CD8-positive, alpha-beta T cell (primary cell): ENCODE measurements at regions of chr16 and their contacts with region 1.

Region 1: DNA sequence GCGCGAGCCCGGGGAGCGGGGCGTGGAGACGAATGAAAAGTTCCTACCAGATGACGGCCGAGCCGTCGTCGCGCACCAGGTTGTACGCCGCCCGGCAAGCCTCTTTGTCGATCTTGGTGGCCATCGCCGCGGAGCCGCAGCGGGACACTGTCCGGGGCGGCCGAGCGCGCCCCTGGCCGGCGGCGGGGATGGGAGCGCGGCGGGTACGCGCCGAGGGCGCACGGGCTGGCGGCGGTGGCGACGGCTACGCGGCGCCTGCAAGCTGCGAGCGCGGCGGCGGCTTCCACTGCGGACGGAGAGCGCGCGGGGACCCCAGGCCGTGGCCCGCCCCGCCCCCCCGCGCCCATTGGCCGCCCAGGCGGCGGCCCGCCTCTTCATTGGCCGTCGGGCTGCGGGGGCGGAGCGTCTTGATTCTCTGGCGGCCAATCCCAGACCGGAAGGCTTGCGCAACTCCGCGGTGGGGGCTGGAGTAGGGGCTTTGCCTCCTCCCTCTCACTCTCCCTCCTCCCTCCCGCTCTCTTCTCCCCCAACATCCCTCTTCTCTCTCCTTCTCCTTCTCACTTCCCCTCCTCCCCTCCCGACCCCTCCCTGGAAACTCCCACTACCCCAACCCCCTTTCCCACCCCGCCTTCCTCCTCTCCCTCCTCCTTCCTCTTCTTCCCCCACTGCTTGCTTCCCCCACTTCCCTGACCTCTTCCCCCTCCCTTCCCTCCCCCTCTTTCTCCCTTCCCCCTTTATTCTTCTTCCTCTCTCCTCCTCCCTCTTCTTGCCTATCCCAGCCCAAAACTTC is at the start of gene COTL1:
- DNase-seq: peak; percentile 85 to 97 (median 95)
- ATAC-seq: peak; percentile 86
- H3K4me3 ChIP-seq: peak within 1 kb of the TSS; percentile 80 to 82
- H3K4me3 Mint-ChIP-seq: peak within 1 kb of the TSS; percentile 95
- H3K27ac ChIP-seq: peak within 1 kb of the TSS; percentile 49 to 66
- H3K27ac Mint-ChIP-seq: peak within 1 kb of the TSS; percentile 90
- H3K4me1 ChIP-seq: peaks cover 43% of the 10 kb centered on the region
- H3K4me1 Mint-ChIP-seq: peaks cover 47% of the 10 kb centered on the region
- H3K27me3 ChIP-seq: peaks cover 0 to 4% of the 10 kb centered on the region in 2 experiments
- H3K27me3 Mint-ChIP-seq: no peaks in the 10 kb centered on the region
- CTCF ChIP-seq: no peak
- total RNA-seq, gene COTL1: 194 to 199 TPM

Region 2: DNA sequence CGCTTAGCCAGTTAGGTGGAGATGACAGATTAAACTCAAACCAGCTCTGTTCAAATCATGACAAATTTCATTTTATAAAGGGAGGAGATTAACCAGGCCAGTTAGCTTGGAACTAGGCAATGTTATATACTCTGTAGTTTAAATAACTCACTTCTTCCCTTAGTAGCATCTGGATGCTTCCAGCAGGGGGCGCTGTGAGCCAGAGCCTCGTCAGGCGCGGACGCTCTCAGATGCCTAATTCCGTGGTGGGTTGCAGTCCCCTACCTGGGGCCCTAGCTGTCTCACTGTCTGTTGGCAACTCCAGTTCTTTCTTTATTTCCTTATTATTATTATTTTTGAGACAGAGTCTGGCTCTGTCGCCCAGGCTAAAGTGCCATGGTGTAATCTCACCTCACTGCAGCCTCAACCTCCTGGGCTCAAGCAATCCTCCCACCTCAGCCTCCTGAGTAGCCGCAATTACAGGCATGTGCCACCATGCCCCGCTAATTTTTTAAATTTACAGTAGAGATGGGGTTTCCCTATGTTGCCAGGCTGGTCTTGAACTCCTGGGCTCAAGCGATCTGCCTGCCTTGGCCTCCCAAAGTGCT is 340.7 kb before region 1 on chr16:
- CTCF ChIA-PET with region 1: interaction called, 6 read pairs
- POLR2A ChIA-PET with region 1: interaction called, 3 read pairs
- intact Hi-C with region 1: loop called in 1 of 2 experiments (anchors 2 kb)
- DNase-seq: peak; percentile 43 to 80 (median 67)
- ATAC-seq: peak; percentile 62
- H3K4me3 ChIP-seq: no peak overlapping the region
- H3K4me3 Mint-ChIP-seq: no peak overlapping the region
- H3K27ac ChIP-seq: no peak overlapping the region
- H3K27ac Mint-ChIP-seq: no peak overlapping the region
- H3K4me1 ChIP-seq: no peaks in the 10 kb centered on the region
- H3K4me1 Mint-ChIP-seq: peaks cover 1% of the 10 kb centered on the region
- H3K27me3 ChIP-seq: no peaks in the 10 kb centered on the region
- H3K27me3 Mint-ChIP-seq: peaks cover 5% of the 10 kb centered on the region
- CTCF ChIP-seq: peak; percentile 82

Region 3: GRCh38 chr16:84548971-84549844 is 68.8 kb before region 1 on chr16:
- CTCF ChIA-PET with region 1: interaction called, 19 read pairs
- POLR2A ChIA-PET with region 1: interaction called, 10 read pairs
- intact Hi-C with region 1: loop called (anchors 1 kb)
- DNase-seq: peak; percentile 10 to 77 (median 40)
- ATAC-seq: peak; percentile 54
- H3K4me3 ChIP-seq: peak overlapping the region; percentile 45 to 63
- H3K4me3 Mint-ChIP-seq: peak overlapping the region; percentile 82
- H3K27ac ChIP-seq: peak overlapping the region; percentile 69 to 83
- H3K27ac Mint-ChIP-seq: peak overlapping the region; percentile 98
- H3K4me1 ChIP-seq: peaks cover 63% of the 10 kb centered on the region
- H3K4me1 Mint-ChIP-seq: peaks cover 68% of the 10 kb centered on the region
- H3K27me3 ChIP-seq: no peaks in the 10 kb centered on the region
- H3K27me3 Mint-ChIP-seq: no peaks in the 10 kb centered on the region
- CTCF ChIP-seq: no peak

Region 4: DNA sequence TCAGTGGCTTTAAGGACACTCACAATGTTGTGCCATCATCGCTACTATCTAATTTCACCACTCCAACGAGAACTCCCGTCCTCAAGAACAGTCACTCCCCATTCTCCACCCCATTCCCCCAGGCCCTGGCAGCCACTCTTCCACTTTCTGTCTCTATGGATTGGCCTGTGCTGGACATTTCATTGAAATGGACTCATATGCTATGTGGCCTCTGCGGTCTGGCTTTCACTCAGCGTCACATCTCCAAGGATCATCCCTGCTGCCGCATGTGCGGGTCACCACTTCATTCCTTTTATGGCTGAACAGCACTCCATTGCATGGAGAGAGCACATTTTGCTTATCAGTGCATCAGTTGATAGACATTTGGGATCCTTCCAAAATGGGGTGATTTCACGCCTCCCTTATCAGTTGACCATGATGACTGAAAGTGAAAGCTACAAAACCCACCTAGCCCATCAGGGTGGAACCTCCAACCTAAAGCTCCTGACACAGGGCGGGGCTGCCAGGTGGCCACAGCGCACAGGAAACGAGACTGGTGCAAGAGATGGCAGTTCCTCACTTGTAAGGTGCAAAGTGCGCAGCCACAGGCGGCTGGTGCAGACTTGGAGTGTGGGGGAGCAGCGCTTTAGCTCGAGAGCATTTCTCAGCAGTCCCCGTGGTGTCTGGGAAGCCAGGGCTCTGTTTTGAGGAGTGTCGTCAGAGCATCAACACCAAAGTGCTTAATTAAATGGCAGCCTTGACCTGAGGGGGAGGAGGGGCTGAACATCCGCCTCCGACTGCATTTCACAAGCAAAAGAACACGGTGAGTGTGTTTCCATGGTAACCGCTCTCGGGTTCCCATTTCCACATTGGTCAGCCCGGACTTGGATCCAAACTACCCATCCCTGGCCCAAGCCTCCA is 23.9 kb before region 1 on chr16:
- CTCF ChIA-PET with region 1: interaction called, 18 read pairs
- POLR2A ChIA-PET with region 1: interaction called, 59 read pairs
- intact Hi-C with region 1: loop called (anchors 1 kb)
- DNase-seq: peak; percentile 69 to 98 (median 84)
- ATAC-seq: peak; percentile 85
- H3K4me3 ChIP-seq: peak overlapping the region; percentile 37 to 46
- H3K4me3 Mint-ChIP-seq: peak overlapping the region; percentile 83
- H3K27ac ChIP-seq: peak overlapping the region; percentile 75 to 94
- H3K27ac Mint-ChIP-seq: peak overlapping the region; percentile 98
- H3K4me1 ChIP-seq: peaks cover 59% of the 10 kb centered on the region
- H3K4me1 Mint-ChIP-seq: peaks cover 72% of the 10 kb centered on the region
- H3K27me3 ChIP-seq: no peaks in the 10 kb centered on the region
- H3K27me3 Mint-ChIP-seq: no peaks in the 10 kb centered on the region
- CTCF ChIP-seq: no peak

Region 5: DNA sequence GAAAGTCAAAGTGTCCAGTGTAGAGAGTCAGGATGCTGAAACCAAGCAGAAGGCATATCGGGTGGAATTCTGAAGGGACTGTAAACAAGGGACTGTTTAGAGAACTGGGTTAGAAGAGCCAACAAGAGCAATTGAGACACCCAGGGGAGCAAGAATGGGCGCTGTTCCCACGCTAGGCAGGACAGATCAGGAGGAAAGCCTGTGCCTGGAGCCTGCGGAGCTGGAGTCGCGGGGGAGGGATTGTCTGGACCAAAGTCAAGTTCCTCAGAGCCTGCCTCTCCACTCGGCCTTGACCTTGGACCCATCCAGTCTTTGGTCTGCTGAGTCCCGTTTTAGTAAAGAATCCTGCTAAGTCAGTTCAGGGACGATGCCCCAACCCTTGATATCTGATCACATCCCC is 15.6 kb after region 1 on chr16:
- CTCF ChIA-PET with region 1: interaction called, 10 read pairs
- POLR2A ChIA-PET with region 1: no interaction called
- intact Hi-C with region 1: no loop called
- DNase-seq: no peak
- ATAC-seq: no peak
- H3K4me3 ChIP-seq: no peak overlapping the region
- H3K4me3 Mint-ChIP-seq: no peak overlapping the region
- H3K27ac ChIP-seq: no peak overlapping the region
- H3K27ac Mint-ChIP-seq: no peak overlapping the region
- H3K4me1 ChIP-seq: peaks cover 34% of the 10 kb centered on the region
- H3K4me1 Mint-ChIP-seq: peaks cover 32% of the 10 kb centered on the region
- H3K27me3 ChIP-seq: no peaks in the 10 kb centered on the region
- H3K27me3 Mint-ChIP-seq: no peaks in the 10 kb centered on the region
- CTCF ChIP-seq: no peak

Region 6: GRCh38 chr16:84720177-84720579 is 102.2 kb after region 1 on chr16:
- CTCF ChIA-PET with region 1: interaction called, 327 read pairs
- POLR2A ChIA-PET with region 1: no interaction called
- intact Hi-C with region 1: no loop called
- DNase-seq: no peak
- ATAC-seq: no peak
- H3K4me3 ChIP-seq: no peak overlapping the region
- H3K4me3 Mint-ChIP-seq: no peak overlapping the region
- H3K27ac ChIP-seq: no peak overlapping the region
- H3K27ac Mint-ChIP-seq: no peak overlapping the region
- H3K4me1 ChIP-seq: peaks cover 33% of the 10 kb centered on the region
- H3K4me1 Mint-ChIP-seq: peaks cover 76% of the 10 kb centered on the region
- H3K27me3 ChIP-seq: no peaks in the 10 kb centered on the region
- H3K27me3 Mint-ChIP-seq: no peaks in the 10 kb centered on the region
- CTCF ChIP-seq: no peak

Region 7: GRCh38 chr16:84754353-84754856 is 136.4 kb after region 1 on chr16:
- CTCF ChIA-PET with region 1: interaction called, 13 read pairs
- POLR2A ChIA-PET with region 1: no interaction called
- intact Hi-C with region 1: no loop called
- DNase-seq: peak; percentile 42 to 87 (median 63)
- ATAC-seq: peak; percentile 72
- H3K4me3 ChIP-seq: no peak overlapping the region
- H3K4me3 Mint-ChIP-seq: peak overlapping the region; percentile 53
- H3K27ac ChIP-seq: peak overlapping the region in 1 of 2 experiments; percentile 2
- H3K27ac Mint-ChIP-seq: peak overlapping the region; percentile 45
- H3K4me1 ChIP-seq: peaks cover 45% of the 10 kb centered on the region
- H3K4me1 Mint-ChIP-seq: peaks cover 81% of the 10 kb centered on the region
- H3K27me3 ChIP-seq: no peaks in the 10 kb centered on the region
- H3K27me3 Mint-ChIP-seq: no peaks in the 10 kb centered on the region
- CTCF ChIP-seq: peak; percentile 93